Activated CD8-positive, alpha-beta T cell treated with anti-CD3 and anti-CD28 coated beads for 36 hours (primary cell): ENCODE measurements at regions of chr6 and their contacts with region 1.

Region 1: DNA sequence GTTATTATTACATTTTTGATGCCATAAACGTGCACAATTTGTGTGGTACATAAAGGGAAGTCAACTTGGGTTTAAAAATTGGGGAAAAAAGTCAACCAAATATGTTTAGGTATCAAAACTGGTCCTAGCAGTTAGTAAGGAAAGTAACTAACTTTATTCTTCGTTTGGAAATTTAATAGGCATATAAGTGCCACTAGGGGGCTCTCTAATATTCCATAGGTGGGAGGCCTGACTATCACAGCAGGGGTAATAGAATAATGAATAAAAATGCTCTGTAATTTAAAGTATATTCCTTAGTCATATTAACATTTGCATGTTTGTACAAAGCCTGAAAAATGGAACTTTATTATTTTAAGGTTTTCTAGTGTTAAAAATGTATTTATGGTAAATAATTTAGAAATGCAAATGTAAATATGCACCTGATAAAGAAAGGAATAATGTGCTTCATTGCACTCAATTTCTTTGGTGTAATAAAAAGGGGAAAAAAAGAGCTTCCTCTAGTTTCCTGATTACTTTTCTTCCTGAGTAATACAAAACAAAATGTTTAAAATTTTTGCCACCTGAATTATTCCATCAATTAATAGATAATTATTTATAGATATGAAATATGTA is 125.7 kb upstream of the HDAC2 start:
- DNase-seq: no peak
- ATAC-seq: no peak
- H3K4me3 Mint-ChIP-seq: no peak overlapping the region
- H3K27ac Mint-ChIP-seq: no peak overlapping the region
- H3K4me1 Mint-ChIP-seq: no peaks in the 10 kb centered on the region
- H3K27me3 Mint-ChIP-seq: peaks cover 8% of the 10 kb centered on the region
- CTCF ChIP-seq: peak; percentile 89

Region 2: GRCh38 chr6:114108119-114109002 is 11.7 kb after region 1 on chr6:
- CTCF ChIA-PET with region 1: interaction called, 14 read pairs
- POLR2A ChIA-PET with region 1: no interaction called
- intact Hi-C with region 1: no loop called
- DNase-seq: peak; percentile 57
- ATAC-seq: no peak
- H3K4me3 Mint-ChIP-seq: no peak overlapping the region
- H3K27ac Mint-ChIP-seq: no peak overlapping the region
- H3K4me1 Mint-ChIP-seq: no peaks in the 10 kb centered on the region
- H3K27me3 Mint-ChIP-seq: peaks cover 4% of the 10 kb centered on the region
- CTCF ChIP-seq: peak; percentile 32

Region 3: DNA sequence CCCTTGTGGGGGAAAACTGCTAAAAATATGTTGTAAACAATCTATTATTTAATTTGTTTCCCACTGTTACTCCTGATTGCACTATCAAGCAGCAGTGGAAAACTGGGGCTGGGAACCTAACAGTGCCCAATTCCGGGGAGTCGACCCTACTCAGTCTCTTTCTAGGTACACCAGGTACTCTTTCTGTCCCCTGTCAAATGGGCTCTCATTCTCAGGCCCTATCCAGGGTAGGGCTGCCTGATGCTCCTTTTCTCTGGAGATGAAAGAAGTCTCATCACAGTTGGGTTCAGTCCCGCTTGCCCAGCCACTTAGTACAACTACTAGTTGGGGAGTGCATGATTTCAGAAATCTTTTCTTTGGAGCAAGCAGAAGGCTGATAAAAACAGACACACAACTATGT is 194.2 kb after region 1 on chr6:
- CTCF ChIA-PET with region 1: no interaction called
- POLR2A ChIA-PET with region 1: no interaction called
- intact Hi-C with region 1: loop called (anchors 10 kb)
- DNase-seq: no peak
- ATAC-seq: no peak
- H3K4me3 Mint-ChIP-seq: no peak overlapping the region
- H3K27ac Mint-ChIP-seq: no peak overlapping the region
- H3K4me1 Mint-ChIP-seq: no peaks in the 10 kb centered on the region
- H3K27me3 Mint-ChIP-seq: no peaks in the 10 kb centered on the region
- CTCF ChIP-seq: no peak